HEK293 (cell line): ENCODE measurements at regions of chr22 and their contacts with region 1.

Region 1: GRCh38 chr22:23281406-23282088 is 101.2 kb downstream of the BCR start:
- H3K4me3 ChIP-seq: no peak overlapping the region
- H3K27ac ChIP-seq: no peak overlapping the region
- H3K4me1 ChIP-seq: no peaks in the 10 kb centered on the region
- CTCF ChIP-seq: peak; percentile 96

Region 2: GRCh38 chr22:23156286-23156685 is 125.3 kb before region 1 on chr22:
- CTCF ChIA-PET with region 1: interaction called, 15 read pairs
- POLR2A ChIA-PET with region 1: no interaction called
- H3K4me3 ChIP-seq: no peak overlapping the region
- H3K27ac ChIP-seq: no peak overlapping the region
- H3K4me1 ChIP-seq: no peaks in the 10 kb centered on the region
- CTCF ChIP-seq: no peak

Region 3: DNA sequence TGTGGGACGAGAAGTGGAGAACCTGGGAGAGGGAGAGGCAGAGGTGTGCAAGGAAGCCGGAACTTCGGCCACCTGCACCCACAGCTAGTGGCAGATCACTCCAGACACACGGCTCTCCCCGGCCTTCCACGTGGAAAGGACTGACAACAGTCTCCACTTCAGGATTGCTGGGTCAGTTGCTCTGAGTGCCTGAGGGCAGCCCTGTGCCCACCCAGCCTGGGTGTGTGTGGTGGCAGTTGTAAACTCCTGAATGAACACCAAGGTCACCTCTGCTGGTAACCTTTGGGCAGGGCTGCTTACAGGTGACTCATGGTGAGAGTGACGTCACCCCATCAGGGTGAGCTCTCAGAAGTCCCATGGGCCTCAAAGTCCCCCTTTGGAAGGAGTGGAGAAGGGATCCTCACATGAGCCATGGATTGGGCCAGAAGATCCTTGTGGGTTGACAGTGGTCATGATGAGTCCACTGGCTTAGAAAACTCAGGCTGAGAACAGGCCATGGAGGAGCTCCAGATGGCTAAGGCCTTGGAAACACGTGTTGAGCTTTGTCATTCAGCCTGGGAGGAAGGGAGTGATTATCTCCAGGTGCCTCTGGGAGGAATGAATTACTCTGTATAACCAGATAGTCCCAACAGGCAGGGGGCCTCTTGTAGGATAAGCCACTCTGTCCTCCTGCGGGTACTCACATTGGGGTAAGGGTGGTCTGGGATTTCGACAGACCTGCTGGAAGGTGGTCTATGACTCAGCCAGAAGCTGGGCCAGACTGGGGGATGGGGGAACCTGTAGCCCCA is 29.9 kb before region 1 on chr22:
- CTCF ChIA-PET with region 1: interaction called, 20 read pairs
- POLR2A ChIA-PET with region 1: no interaction called
- H3K4me3 ChIP-seq: no peak overlapping the region
- H3K27ac ChIP-seq: no peak overlapping the region
- H3K4me1 ChIP-seq: no peaks in the 10 kb centered on the region
- CTCF ChIP-seq: no peak

Region 4: DNA sequence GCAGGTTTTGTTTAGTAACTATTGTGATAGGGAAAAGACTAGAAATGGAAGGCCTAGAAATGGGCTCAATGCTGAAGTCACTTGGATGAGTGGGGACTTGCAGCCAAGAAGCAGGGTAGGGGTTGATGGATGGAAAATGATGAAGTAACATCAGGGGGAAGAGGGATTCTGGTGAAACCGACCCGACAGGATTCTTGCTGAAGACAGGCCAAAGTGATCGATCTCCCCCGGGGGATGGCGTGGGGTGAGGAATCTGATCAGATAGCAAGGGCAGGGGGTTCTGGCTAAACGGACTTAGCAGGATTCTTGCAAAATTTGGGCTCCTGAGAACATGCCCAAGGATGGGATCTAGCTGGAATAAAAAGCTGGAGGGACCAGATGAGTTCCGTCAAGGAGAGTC is 16.5 kb after region 1 on chr22:
- CTCF ChIA-PET with region 1: interaction called, 20 read pairs
- POLR2A ChIA-PET with region 1: no interaction called
- H3K4me3 ChIP-seq: no peak overlapping the region
- H3K27ac ChIP-seq: no peak overlapping the region
- H3K4me1 ChIP-seq: no peaks in the 10 kb centered on the region
- CTCF ChIP-seq: no peak

Region 5: GRCh38 chr22:23504516-23504915 is 223.0 kb after region 1 on chr22:
- CTCF ChIA-PET with region 1: no interaction called
- POLR2A ChIA-PET with region 1: no interaction called
- H3K4me3 ChIP-seq: no peak overlapping the region
- H3K27ac ChIP-seq: no peak overlapping the region
- H3K4me1 ChIP-seq: no peaks in the 10 kb centered on the region
- CTCF ChIP-seq: no peak